ENCODE measurements at regions of chr10 and their contacts with region 1.

Region 1: GRCh38 chr10:85976267-85976793 is 390.3 kb downstream of the GRID1 start:
- DNase-seq: no peak
- H3K4me3 ChIP-seq: no peak overlapping the region
- H3K27ac ChIP-seq: no peak overlapping the region
- H3K4me1 ChIP-seq: peaks cover 11% of the 10 kb centered on the region
- H3K27me3 ChIP-seq: no peaks in the 10 kb centered on the region
- CTCF ChIP-seq: no peak

Region 2: DNA sequence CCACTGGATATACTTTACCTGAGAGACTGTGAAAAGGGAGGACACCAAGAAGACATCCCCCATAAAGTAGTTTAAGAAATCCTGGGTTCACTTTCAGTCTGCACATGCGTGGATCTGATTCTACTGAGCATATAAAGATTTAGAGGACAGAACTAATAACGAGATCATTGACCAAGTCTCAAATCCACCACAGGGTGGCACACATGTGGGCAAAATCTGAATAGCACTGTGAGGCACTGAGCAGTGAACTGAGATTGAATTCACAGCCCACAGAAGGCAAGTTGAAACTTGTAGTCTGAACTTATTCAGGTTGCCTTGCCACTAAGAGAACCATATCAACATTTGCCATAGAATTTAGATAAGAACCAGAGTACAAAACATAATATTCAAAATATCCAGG is 428.3 kb before region 1 on chr10:
- CTCF ChIA-PET with region 1: no interaction called
- dilution Hi-C with region 1: no loop called
- in situ Hi-C with region 1: no loop called
- intact Hi-C with region 1: loop called (anchors 5 kb)
- DNase-seq: peak; percentile 76
- H3K4me3 ChIP-seq: no peak overlapping the region
- H3K27ac ChIP-seq: no peak overlapping the region
- H3K4me1 ChIP-seq: peaks cover 8% of the 10 kb centered on the region
- H3K27me3 ChIP-seq: no peaks in the 10 kb centered on the region
- CTCF ChIP-seq: peak; percentile 74

Region 3: DNA sequence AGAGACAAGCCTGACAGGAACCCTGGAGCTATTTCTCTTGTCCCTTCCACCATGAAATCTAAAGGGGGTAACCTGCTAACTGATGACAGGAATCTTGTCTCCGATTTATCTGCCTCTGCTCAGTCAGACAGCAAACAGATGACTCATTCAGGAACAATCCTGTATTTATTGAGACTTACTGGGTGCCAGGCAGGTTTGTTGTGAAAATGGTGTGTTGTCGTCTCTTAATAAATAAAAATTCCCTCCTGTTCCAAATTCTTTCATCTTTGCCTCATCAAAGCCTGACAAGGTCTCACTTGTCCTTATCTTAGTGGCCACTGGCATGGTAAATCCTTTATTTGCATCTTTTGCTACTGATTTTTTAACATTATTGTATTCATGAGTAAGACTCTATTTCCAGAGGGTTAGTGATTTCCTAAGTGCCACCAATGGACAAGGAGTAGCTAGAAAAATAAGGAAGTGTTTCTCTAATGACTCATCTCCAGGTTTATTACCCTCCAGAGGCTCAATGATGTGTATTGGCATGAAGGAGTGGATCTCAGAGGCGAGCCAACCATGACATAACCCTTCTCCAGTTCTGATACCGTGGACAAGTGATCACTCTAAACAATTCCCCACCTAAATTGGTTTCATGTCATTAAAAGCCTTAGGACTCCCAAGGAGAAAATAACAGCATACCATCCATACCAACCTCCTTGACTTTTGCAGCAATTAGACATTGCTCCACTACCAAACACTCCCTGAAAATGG is 333.7 kb before region 1 on chr10:
- CTCF ChIA-PET with region 1: no interaction called
- dilution Hi-C with region 1: no loop called
- in situ Hi-C with region 1: no loop called
- intact Hi-C with region 1: loop called (anchors 10 kb)
- DNase-seq: peak; percentile 80
- H3K4me3 ChIP-seq: no peak overlapping the region
- H3K27ac ChIP-seq: peak overlapping the region; percentile 83
- H3K4me1 ChIP-seq: peaks cover 33% of the 10 kb centered on the region
- H3K27me3 ChIP-seq: no peaks in the 10 kb centered on the region
- CTCF ChIP-seq: no peak

Region 4: GRCh38 chr10:85666102-85666501 is 310.2 kb before region 1 on chr10:
- CTCF ChIA-PET with region 1: no interaction called
- dilution Hi-C with region 1: no loop called
- in situ Hi-C with region 1: no loop called
- intact Hi-C with region 1: no loop called
- DNase-seq: no peak
- H3K4me3 ChIP-seq: no peak overlapping the region
- H3K27ac ChIP-seq: no peak overlapping the region
- H3K4me1 ChIP-seq: no peaks in the 10 kb centered on the region
- H3K27me3 ChIP-seq: no peaks in the 10 kb centered on the region
- CTCF ChIP-seq: no peak

Region 5: DNA sequence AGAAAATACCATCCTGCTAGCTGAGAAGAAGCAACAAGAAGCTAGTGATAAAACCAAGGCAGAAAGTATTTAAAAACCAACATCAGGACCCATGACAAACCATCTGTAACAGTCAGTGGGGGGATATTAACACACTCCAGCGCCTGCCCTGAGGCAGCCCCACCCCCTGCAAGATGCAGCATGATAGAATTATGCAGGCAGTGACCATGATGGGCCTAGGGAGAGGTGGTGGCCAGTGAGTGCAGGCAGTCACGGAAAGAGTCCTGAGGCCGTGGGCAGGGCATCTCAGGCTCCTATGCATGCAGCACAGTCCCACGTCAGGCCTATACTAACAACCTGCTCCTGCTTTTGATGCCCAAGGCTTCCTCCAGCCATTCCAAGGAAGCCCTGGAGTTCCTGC is 296.6 kb before region 1 on chr10:
- CTCF ChIA-PET with region 1: no interaction called
- dilution Hi-C with region 1: no loop called
- in situ Hi-C with region 1: no loop called
- intact Hi-C with region 1: no loop called
- DNase-seq: no peak
- H3K4me3 ChIP-seq: no peak overlapping the region
- H3K27ac ChIP-seq: no peak overlapping the region
- H3K4me1 ChIP-seq: no peaks in the 10 kb centered on the region
- H3K27me3 ChIP-seq: no peaks in the 10 kb centered on the region
- CTCF ChIP-seq: no peak